PC-9 (cell line): ENCODE measurements at regions of chr6 and their contacts with region 1.

Region 1: GRCh38 chr6:43075670-43076463 is at the start of gene PTK7:
- DNase-seq: peak in 1 of 2 experiments; percentile 73
- H3K4me3 ChIP-seq: peak within 1 kb of the TSS; percentile 100
- H3K27ac ChIP-seq: 0 out of 2 replicates have a peak within 1 kb of the TSS, but pooled peaks have one; percentile 32
- H3K4me1 ChIP-seq: peaks cover 13% of the 10 kb centered on the region
- H3K27me3 ChIP-seq: no peaks in the 10 kb centered on the region
- CTCF ChIP-seq: no peak
- total RNA-seq, gene PTK7: 106 and 110 TPM in 2 replicates

Region 2: DNA sequence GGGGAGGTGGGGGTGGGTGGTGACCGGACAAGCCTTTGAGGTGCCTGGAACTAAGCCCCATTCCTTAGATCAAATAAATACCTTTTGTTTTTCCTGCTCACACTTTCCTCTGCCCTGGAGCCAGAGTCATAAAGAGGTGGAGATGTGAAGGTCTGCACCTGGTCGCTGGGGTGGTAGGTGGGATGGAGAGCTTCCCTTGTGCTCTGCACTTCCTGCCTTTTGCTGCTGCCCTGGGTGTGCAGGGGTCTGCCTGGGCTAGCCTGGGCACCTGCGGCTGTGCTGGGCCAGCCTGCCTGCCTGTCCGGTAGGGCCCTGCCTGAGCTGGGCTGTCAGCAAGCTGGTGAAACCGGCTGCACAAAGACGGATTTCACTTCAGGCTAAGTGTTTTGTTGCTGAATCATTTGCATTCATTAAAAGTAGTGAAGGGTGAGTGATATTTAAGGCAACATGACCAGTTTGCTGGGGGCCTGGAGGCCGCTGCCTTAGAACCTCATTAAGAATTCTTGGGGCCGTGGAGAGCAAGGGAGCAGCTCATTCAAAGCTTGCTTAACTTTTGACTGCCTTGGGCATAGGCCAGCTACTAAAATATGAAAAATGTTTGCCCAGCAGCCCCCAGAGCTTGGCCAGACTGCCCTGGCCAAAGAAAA is 20.7 kb after region 1 on chr6:
- CTCF ChIA-PET with region 1: no interaction called
- POLR2A ChIA-PET with region 1: interaction called, 5 read pairs
- intact Hi-C with region 1: loop called (anchors 2 kb)
- DNase-seq: peak; percentile 89 to 98
- H3K4me3 ChIP-seq: peak overlapping the region; percentile 47; the same call in 1 of the 2 replicates
- H3K27ac ChIP-seq: peak overlapping the region; percentile 89
- H3K4me1 ChIP-seq: peaks cover 60% of the 10 kb centered on the region
- H3K27me3 ChIP-seq: no peaks in the 10 kb centered on the region
- CTCF ChIP-seq: no peak; the same call in 1 of the 2 replicates

Region 3: GRCh38 chr6:43113431-43114260 is 37.8 kb after region 1 on chr6:
- CTCF ChIA-PET with region 1: no interaction called
- POLR2A ChIA-PET with region 1: interaction called, 10 read pairs
- intact Hi-C with region 1: no loop called
- DNase-seq: no peak
- H3K4me3 ChIP-seq: no peak overlapping the region
- H3K27ac ChIP-seq: no peak overlapping the region; the same call in 1 of the 2 replicates
- H3K4me1 ChIP-seq: peaks cover 15% of the 10 kb centered on the region; the same call in 1 of the 2 replicates
- H3K27me3 ChIP-seq: no peaks in the 10 kb centered on the region
- CTCF ChIP-seq: no peak

Region 4: GRCh38 chr6:43120944-43121913 is 45.4 kb after region 1 on chr6:
- CTCF ChIA-PET with region 1: no interaction called
- POLR2A ChIA-PET with region 1: no interaction called
- intact Hi-C with region 1: loop called (anchors 2 kb)
- DNase-seq: peak; percentile 70 to 94
- H3K4me3 ChIP-seq: no peak overlapping the region
- H3K27ac ChIP-seq: peak overlapping the region; percentile 91
- H3K4me1 ChIP-seq: peaks cover 32% of the 10 kb centered on the region
- H3K27me3 ChIP-seq: no peaks in the 10 kb centered on the region
- CTCF ChIP-seq: no peak

Region 5: GRCh38 chr6:43143235-43144124 is 67.6 kb after region 1 on chr6:
- CTCF ChIA-PET with region 1: no interaction called
- POLR2A ChIA-PET with region 1: interaction called, 10 read pairs
- intact Hi-C with region 1: no loop called
- DNase-seq: peak; percentile 61 to 87
- H3K4me3 ChIP-seq: no peak overlapping the region
- H3K27ac ChIP-seq: no peak overlapping the region
- H3K4me1 ChIP-seq: no peaks in the 10 kb centered on the region
- H3K27me3 ChIP-seq: no peaks in the 10 kb centered on the region
- CTCF ChIP-seq: peak; percentile 94

Region 6: DNA sequence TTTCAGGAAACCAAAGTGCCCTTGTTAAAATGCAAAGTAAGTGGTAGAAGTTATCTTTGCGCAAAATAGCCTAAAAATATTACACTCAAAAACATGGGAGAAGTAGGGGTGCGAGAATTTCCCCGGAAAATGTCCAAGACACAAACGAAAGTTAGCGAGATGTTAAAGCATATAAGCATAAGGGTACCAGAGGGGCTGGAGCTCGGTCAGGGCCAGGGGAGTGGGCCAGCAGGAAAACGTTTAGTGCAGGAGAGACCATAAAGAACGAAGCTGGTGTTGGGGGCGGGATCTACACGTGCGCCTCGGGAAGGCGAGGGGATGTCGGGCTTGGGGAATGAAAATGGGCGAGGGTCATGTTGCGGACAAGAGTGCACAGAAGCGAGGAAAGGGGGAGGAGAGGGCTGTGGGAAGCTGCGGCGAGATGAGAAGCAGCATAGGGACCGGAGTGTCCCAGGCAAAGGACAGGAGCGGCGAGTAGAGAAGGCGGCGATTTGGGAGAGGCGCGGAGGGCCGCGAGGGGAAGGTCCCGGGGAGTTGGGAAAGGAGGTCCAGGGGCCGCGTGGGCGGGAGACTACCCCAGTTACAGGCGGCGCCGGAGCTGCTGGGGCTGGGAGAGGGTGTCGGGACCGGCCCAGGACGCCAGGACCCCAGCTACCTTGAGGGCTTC is 499.4 kb after region 1 on chr6:
- CTCF ChIA-PET with region 1: interaction called, 14 read pairs
- POLR2A ChIA-PET with region 1: no interaction called
- intact Hi-C with region 1: no loop called
- DNase-seq: no peak
- H3K4me3 ChIP-seq: peak overlapping the region; percentile 71
- H3K27ac ChIP-seq: peak overlapping the region; percentile 33; the same call in 1 of the 2 replicates
- H3K4me1 ChIP-seq: peaks cover 38% of the 10 kb centered on the region
- H3K27me3 ChIP-seq: no peaks in the 10 kb centered on the region
- CTCF ChIP-seq: no peak

Region 7: GRCh38 chr6:43621429-43622180 is 545.7 kb after region 1 on chr6:
- CTCF ChIA-PET with region 1: no interaction called
- POLR2A ChIA-PET with region 1: no interaction called
- intact Hi-C with region 1: no loop called
- DNase-seq: no peak
- H3K4me3 ChIP-seq: no peak overlapping the region
- H3K27ac ChIP-seq: no peak overlapping the region
- H3K4me1 ChIP-seq: peaks cover 9% of the 10 kb centered on the region
- H3K27me3 ChIP-seq: no peaks in the 10 kb centered on the region
- CTCF ChIP-seq: no peak

Region 8: GRCh38 chr6:43714311-43715055 is 638.6 kb after region 1 on chr6:
- CTCF ChIA-PET with region 1: no interaction called
- POLR2A ChIA-PET with region 1: no interaction called
- intact Hi-C with region 1: no loop called
- DNase-seq: no peak
- H3K4me3 ChIP-seq: no peak overlapping the region
- H3K27ac ChIP-seq: no peak overlapping the region
- H3K4me1 ChIP-seq: peaks cover 6% of the 10 kb centered on the region
- H3K27me3 ChIP-seq: no peaks in the 10 kb centered on the region
- CTCF ChIP-seq: no peak

Region 9: GRCh38 chr6:44064089-44064947 is 988.5 kb after region 1 on chr6:
- CTCF ChIA-PET with region 1: no interaction called
- POLR2A ChIA-PET with region 1: interaction called, 11 read pairs
- intact Hi-C with region 1: no loop called
- DNase-seq: peak; percentile 71 to 77
- H3K4me3 ChIP-seq: no peak overlapping the region
- H3K27ac ChIP-seq: peak overlapping the region; percentile 60
- H3K4me1 ChIP-seq: peaks cover 65% of the 10 kb centered on the region
- H3K27me3 ChIP-seq: no peaks in the 10 kb centered on the region
- CTCF ChIP-seq: no peak